Aorta (tissue), 5 donors: ENCODE measurements at regions of chr21 and their contacts with region 1.

Region 1: GRCh38 chr21:42097860-42098454 is 26.8 kb downstream of the UMODL1 start:
- DNase-seq: peak in 1 of 2 donors; percentile 89
- ATAC-seq: peak; percentile 81
- H3K4me3 ChIP-seq: no peak overlapping the region
- H3K27ac ChIP-seq: peak overlapping the region; percentile 85 to 91
- H3K4me1 ChIP-seq: peaks cover 5 to 8% of the 10 kb centered on the region in 2 donors
- H3K27me3 ChIP-seq: no peaks in the 10 kb centered on the region

Region 2: GRCh38 chr21:41953831-41954653 is 143.9 kb before region 1 on chr21 and contains the start of gene C2CD2:
- intact Hi-C with region 1: loop called in 1 of 2 experiments (anchors 2 kb)
- DNase-seq: peak; percentile 83 to 92
- ATAC-seq: peak; percentile 89
- H3K4me3 ChIP-seq: peak within 1 kb of the TSS; percentile 76 to 78
- H3K27ac ChIP-seq: peak within 1 kb of the TSS in 1 of 2 donors; percentile 78
- H3K4me1 ChIP-seq: no peaks in the 10 kb centered on the region
- H3K27me3 ChIP-seq: no peaks in the 10 kb centered on the region
- total RNA-seq, gene C2CD2: 56.8 to 59.8 TPM

Region 3: DNA sequence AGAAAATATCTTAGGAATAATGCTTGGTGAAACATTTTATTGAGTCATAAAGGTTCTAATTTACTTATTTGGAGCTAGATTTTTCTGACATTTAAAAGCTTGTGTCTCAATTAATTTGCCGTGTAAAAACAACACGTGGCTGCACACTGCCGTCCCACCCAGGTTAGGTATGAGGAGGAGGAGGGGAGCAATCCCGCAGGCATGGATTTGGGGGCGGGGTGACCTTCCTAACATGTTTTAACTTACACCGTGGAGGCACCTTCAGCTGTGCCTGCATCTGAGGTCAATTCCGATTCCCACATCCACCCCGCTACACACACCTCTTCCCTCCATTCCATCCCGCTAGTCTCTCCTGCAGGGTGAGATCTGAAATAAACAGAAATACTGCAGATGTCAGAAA is 55.3 kb before region 1 on chr21:
- intact Hi-C with region 1: no loop called
- DNase-seq: no peak
- ATAC-seq: no peak
- H3K4me3 ChIP-seq: no peak overlapping the region
- H3K27ac ChIP-seq: no peak overlapping the region
- H3K4me1 ChIP-seq: peaks cover 0 to 4% of the 10 kb centered on the region in 2 donors
- H3K27me3 ChIP-seq: no peaks in the 10 kb centered on the region

Region 4: DNA sequence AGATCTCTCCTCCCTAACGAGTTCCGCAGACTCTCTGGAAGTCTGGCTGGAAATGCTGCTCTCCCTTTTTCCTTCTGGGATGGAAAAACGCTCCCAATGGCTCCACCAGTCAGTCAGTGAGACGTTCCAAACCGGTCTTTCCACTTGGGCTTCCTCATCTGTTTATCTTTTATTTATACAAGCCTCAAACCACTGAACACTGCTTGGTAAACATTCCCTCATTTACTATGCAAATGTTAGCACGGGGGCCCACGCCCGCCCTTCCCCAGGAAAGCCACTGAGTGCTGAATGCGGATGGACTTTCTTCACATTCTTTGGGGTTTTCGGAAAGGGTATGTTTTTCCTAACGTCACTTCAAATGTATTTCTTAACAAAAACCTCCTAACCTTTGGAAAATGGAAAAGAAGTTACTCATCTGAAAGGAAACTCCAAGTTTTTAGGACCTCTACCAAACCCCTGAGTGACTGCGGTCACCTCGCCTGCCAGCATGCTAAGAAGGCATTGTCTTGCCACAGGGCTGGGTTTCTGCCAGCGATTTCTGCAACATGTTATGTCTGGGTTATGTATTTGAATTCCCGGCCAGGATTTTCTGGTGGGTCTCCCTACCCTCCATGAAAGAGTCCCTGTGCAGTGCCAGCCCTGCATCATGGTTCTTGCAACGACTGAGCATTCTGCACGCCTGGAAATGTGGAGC is 40.8 kb before region 1 on chr21:
- intact Hi-C with region 1: loop called in 1 of 2 experiments (anchors 2 kb)
- DNase-seq: peak; percentile 89
- ATAC-seq: peak; percentile 19
- H3K4me3 ChIP-seq: no peak overlapping the region
- H3K27ac ChIP-seq: peak overlapping the region; percentile 77 to 86
- H3K4me1 ChIP-seq: no peaks in the 10 kb centered on the region
- H3K27me3 ChIP-seq: no peaks in the 10 kb centered on the region

Region 5: GRCh38 chr21:42209819-42210479 is 112.0 kb after region 1 on chr21:
- intact Hi-C with region 1: no loop called
- DNase-seq: no peak
- ATAC-seq: no peak
- H3K4me3 ChIP-seq: no peak overlapping the region
- H3K27ac ChIP-seq: no peak overlapping the region
- H3K4me1 ChIP-seq: no peaks in the 10 kb centered on the region
- H3K27me3 ChIP-seq: no peaks in the 10 kb centered on the region

Region 6: GRCh38 chr21:42381334-42381984 is 283.5 kb after region 1 on chr21:
- intact Hi-C with region 1: no loop called
- DNase-seq: peak in 1 of 2 donors; percentile 50
- ATAC-seq: no peak
- H3K4me3 ChIP-seq: no peak overlapping the region
- H3K27ac ChIP-seq: no peak overlapping the region
- H3K4me1 ChIP-seq: no peaks in the 10 kb centered on the region
- H3K27me3 ChIP-seq: no peaks in the 10 kb centered on the region